Activated CD8-positive, alpha-beta T cell treated with anti-CD3 and anti-CD28 coated beads, Interleukin-2, amount 10 ng/mL, durations not matched to agents 7 days and 5 days (primary cell): ENCODE measurements at regions of chr3 and their contacts with region 1.

Region 1: DNA sequence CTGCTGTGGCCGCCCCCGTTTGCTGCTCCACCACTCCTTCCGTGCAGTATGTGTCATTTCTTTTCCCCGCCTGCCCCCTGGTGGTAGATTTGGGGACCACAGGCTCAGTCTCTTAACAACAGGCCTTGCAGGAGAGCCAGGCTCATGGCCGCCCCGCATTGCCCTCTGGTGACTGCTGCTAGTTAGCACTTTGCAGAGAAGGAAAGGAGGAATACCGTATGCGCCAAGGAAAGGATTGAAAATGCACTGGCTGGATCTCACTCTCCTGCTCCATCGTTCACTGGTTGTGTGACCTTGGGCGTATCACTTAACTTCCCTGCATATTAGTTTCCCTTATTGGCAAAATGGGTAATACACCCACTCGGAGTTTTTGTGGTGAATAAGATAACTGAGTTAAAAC is 39.3 kb upstream of the PXYLP1 start:
- DNase-seq: peak; percentile 97
- ATAC-seq: peak; percentile 100
- H3K4me3 Mint-ChIP-seq: no peak overlapping the region
- H3K27ac Mint-ChIP-seq: no peak overlapping the region
- H3K4me1 Mint-ChIP-seq: peaks cover 14% of the 10 kb centered on the region
- H3K27me3 Mint-ChIP-seq: peaks cover 21% of the 10 kb centered on the region

Region 2: GRCh38 chr3:140898340-140899180 is 293.8 kb before region 1 on chr3:
- CTCF ChIA-PET with region 1: interaction called, 18 read pairs
- POLR2A ChIA-PET with region 1: no interaction called
- DNase-seq: peak; percentile 32
- ATAC-seq: peak; percentile 57
- H3K4me3 Mint-ChIP-seq: no peak overlapping the region
- H3K27ac Mint-ChIP-seq: no peak overlapping the region
- H3K4me1 Mint-ChIP-seq: no peaks in the 10 kb centered on the region
- H3K27me3 Mint-ChIP-seq: peaks cover 20% of the 10 kb centered on the region

Region 3: DNA sequence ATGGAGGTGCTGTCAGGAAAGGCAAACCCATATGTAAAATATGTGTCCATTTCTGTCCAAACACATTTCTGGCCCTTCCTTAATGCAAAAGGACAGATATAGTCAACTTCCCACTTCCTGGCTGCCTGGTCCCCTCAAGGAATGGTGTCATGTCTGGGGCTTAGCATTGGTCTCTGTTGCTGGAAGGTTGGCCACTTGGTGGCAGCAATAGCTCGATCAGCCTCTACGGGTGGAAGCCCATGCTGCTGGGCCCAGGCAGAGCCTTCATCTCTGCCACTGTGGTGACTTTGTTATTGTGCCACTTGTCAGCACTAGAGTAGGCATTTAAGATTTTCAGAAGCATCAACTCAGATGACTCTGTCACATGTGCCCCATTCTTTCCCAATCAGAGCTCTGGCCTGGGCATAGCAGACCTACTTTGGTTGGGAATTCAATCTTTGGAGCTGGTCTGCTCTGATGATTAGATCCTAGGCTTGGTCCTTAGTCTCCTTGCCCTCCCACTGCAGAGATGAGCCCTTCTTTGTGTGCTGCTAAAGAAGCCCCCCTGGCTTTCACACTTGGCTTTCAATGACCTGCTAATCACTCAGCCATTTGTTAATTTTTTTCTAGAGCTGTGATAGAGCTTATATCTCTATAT is 192.2 kb before region 1 on chr3:
- CTCF ChIA-PET with region 1: interaction called, 71 read pairs
- POLR2A ChIA-PET with region 1: interaction called, 3 read pairs
- DNase-seq: peak; percentile 69
- ATAC-seq: peak; percentile 92
- H3K4me3 Mint-ChIP-seq: no peak overlapping the region
- H3K27ac Mint-ChIP-seq: no peak overlapping the region
- H3K4me1 Mint-ChIP-seq: peaks cover 7% of the 10 kb centered on the region
- H3K27me3 Mint-ChIP-seq: peaks cover 9% of the 10 kb centered on the region

Region 4: GRCh38 chr3:141011232-141011996 is 180.9 kb before region 1 on chr3:
- CTCF ChIA-PET with region 1: interaction called, 41 read pairs
- POLR2A ChIA-PET with region 1: no interaction called
- DNase-seq: peak; percentile 87
- ATAC-seq: peak; percentile 99
- H3K4me3 Mint-ChIP-seq: no peak overlapping the region
- H3K27ac Mint-ChIP-seq: no peak overlapping the region
- H3K4me1 Mint-ChIP-seq: peaks cover 12% of the 10 kb centered on the region
- H3K27me3 Mint-ChIP-seq: peaks cover 24% of the 10 kb centered on the region

Region 5: GRCh38 chr3:141050576-141051442 is 141.5 kb before region 1 on chr3 and contains the start of gene SPSB4:
- CTCF ChIA-PET with region 1: interaction called, 11 read pairs
- POLR2A ChIA-PET with region 1: no interaction called
- DNase-seq: peak; percentile 47
- ATAC-seq: peak; percentile 70
- H3K4me3 Mint-ChIP-seq: peak within 1 kb of the TSS; percentile 67
- H3K27ac Mint-ChIP-seq: no peak within 1 kb of the TSS
- H3K4me1 Mint-ChIP-seq: peaks cover 18% of the 10 kb centered on the region
- H3K27me3 Mint-ChIP-seq: peaks cover 65% of the 10 kb centered on the region
- total RNA-seq, gene SPSB4: not detected

Region 6: GRCh38 chr3:141114816-141115460 is 77.4 kb before region 1 on chr3:
- CTCF ChIA-PET with region 1: interaction called, 12 read pairs
- POLR2A ChIA-PET with region 1: no interaction called
- DNase-seq: no peak
- ATAC-seq: no peak
- H3K4me3 Mint-ChIP-seq: no peak overlapping the region
- H3K27ac Mint-ChIP-seq: no peak overlapping the region
- H3K4me1 Mint-ChIP-seq: no peaks in the 10 kb centered on the region
- H3K27me3 Mint-ChIP-seq: peaks cover 10% of the 10 kb centered on the region

Region 7: GRCh38 chr3:141255846-141256261 is 63.5 kb after region 1 on chr3:
- CTCF ChIA-PET with region 1: interaction called, 16 read pairs
- POLR2A ChIA-PET with region 1: no interaction called
- DNase-seq: peak; percentile 66
- ATAC-seq: peak; percentile 98
- H3K4me3 Mint-ChIP-seq: no peak overlapping the region
- H3K27ac Mint-ChIP-seq: peak overlapping the region; percentile 66
- H3K4me1 Mint-ChIP-seq: peaks cover 25% of the 10 kb centered on the region
- H3K27me3 Mint-ChIP-seq: no peaks in the 10 kb centered on the region

Region 8: GRCh38 chr3:141452036-141452435 is 259.7 kb after region 1 on chr3:
- CTCF ChIA-PET with region 1: no interaction called
- POLR2A ChIA-PET with region 1: no interaction called
- DNase-seq: peak; percentile 76
- ATAC-seq: peak; percentile 90
- H3K4me3 Mint-ChIP-seq: no peak overlapping the region
- H3K27ac Mint-ChIP-seq: no peak overlapping the region
- H3K4me1 Mint-ChIP-seq: peaks cover 8% of the 10 kb centered on the region
- H3K27me3 Mint-ChIP-seq: no peaks in the 10 kb centered on the region